ENCODE measurements at regions of chr4 and their contacts with region 1.

Region 1: DNA sequence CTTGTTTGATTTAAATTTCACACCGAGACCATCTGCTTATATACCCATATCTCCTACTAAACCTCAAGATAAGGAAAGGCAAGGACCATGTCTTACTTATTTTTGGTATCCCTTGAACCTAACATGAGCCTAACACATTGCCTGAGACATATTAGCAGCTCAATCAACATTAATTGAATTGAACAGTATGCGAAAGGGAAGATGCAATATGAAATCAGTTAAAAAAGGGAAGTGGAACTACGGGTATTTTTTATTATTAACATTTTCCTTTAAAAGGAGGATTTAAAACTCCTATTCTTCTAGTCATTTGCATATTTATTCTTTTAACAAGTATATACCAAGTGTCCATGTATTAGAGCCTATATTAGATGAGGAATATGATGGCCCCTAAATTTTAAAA is 197.0 kb downstream of the CAMK2D start:
- DNase-seq: peak; percentile 67
- H3K4me3 ChIP-seq: peak overlapping the region; percentile 48
- H3K27ac ChIP-seq: peak overlapping the region; percentile 99
- H3K4me1 ChIP-seq: peaks cover 90% of the 10 kb centered on the region
- CTCF ChIP-seq: no peak

Region 2: GRCh38 chr4:113513382-113513781 is 51.1 kb before region 1 on chr4:
- CTCF ChIA-PET with region 1: no interaction called
- POLR2A ChIA-PET with region 1: no interaction called
- intact Hi-C with region 1: no loop called
- DNase-seq: no peak
- H3K4me3 ChIP-seq: no peak overlapping the region
- H3K27ac ChIP-seq: no peak overlapping the region
- H3K4me1 ChIP-seq: no peaks in the 10 kb centered on the region
- CTCF ChIP-seq: no peak

Region 3: DNA sequence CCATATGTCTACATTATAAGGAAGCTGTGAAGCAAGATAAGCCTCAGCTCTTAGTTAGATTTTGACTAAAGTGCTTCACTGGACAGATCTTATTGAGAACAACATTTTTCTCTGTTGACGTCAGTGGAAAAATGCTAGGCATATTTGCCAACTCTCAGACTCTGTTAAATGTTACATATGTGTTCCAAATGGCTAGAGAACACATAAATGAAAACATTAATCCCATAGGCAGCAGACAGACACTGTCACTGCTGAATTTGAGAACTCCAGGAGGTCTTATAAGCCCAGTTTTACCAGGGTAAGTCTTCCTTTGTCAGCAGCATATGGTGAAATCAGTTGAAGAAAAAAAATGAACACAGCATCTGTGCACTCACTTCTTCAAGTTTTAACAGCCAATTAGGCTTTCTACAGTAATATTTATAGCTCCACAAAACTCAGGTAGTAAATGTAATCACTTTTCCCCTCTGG is 10.2 kb after region 1 on chr4:
- CTCF ChIA-PET with region 1: interaction called, 3 read pairs
- POLR2A ChIA-PET with region 1: interaction called, 159 read pairs
- intact Hi-C with region 1: no loop called
- DNase-seq: peak; percentile 31
- H3K4me3 ChIP-seq: peak overlapping the region; percentile 47
- H3K27ac ChIP-seq: peak overlapping the region; percentile 77
- H3K4me1 ChIP-seq: peaks cover 95% of the 10 kb centered on the region
- CTCF ChIP-seq: no peak

Region 4: GRCh38 chr4:113593400-113594230 is 29.1 kb after region 1 on chr4:
- CTCF ChIA-PET with region 1: no interaction called
- POLR2A ChIA-PET with region 1: interaction called, 21 read pairs
- intact Hi-C with region 1: no loop called
- DNase-seq: peak; percentile 60
- H3K4me3 ChIP-seq: peak overlapping the region; percentile 29
- H3K27ac ChIP-seq: peak overlapping the region; percentile 79
- H3K4me1 ChIP-seq: peaks cover 52% of the 10 kb centered on the region
- CTCF ChIP-seq: no peak

Region 5: DNA sequence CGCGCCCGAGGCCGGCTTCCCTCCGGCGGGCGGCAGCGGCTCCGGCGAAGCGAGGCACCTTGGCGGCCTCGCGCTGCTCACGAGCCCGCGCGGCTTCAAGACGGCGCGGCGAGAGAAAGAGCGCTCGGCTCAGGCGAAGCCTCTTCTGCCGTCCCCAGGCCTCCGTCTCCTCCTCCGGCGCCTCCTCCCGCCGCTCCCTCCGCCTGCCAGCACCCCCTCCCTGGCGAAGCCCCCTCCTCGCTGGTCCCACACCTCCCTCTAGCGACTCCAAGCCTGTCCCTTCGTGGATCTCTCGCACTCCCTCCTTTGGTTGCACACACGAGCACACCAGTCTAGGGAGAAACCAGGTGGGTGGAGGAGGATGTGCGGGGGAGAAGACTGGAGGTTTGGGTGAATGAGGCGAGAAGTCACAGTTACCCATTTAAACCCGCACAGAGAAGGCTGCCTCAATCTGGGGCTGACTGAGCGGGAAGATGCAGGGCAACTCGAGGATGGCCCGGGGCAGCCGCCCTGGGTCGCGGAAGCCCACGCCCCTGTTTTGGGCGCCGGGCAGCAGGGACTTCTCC is 197.2 kb after region 1 on chr4 and contains the start of gene CAMK2D:
- CTCF ChIA-PET with region 1: interaction called, 3 read pairs
- POLR2A ChIA-PET with region 1: interaction called, 34 read pairs
- intact Hi-C with region 1: loop called (anchors 1 kb)
- DNase-seq: peak; percentile 91
- H3K4me3 ChIP-seq: peak within 1 kb of the TSS; percentile 89
- H3K27ac ChIP-seq: peak within 1 kb of the TSS; percentile 99
- H3K4me1 ChIP-seq: peaks cover 27% of the 10 kb centered on the region
- CTCF ChIP-seq: peak; percentile 76
- total RNA-seq, gene CAMK2D: 109 and 120 TPM in 2 replicates

Measured in OCI-LY7 (cell line).